Posterior cingulate gyrus (tissue), 11 donors: ENCODE measurements at regions of chr15 and their contacts with region 1.

Region 1: GRCh38 chr15:72231066-72231846 is at the start of gene PKM:
- DNase-seq: peak; percentile 73 to 99 (median 90)

Region 2: GRCh38 chr15:72117486-72118399 is 113.5 kb before region 1 on chr15 and contains the start of gene MYO9A:
- intact Hi-C with region 1: loop called (anchors 2 kb)
- DNase-seq: peak; percentile 93 to 99 (median 96)

Region 3: DNA sequence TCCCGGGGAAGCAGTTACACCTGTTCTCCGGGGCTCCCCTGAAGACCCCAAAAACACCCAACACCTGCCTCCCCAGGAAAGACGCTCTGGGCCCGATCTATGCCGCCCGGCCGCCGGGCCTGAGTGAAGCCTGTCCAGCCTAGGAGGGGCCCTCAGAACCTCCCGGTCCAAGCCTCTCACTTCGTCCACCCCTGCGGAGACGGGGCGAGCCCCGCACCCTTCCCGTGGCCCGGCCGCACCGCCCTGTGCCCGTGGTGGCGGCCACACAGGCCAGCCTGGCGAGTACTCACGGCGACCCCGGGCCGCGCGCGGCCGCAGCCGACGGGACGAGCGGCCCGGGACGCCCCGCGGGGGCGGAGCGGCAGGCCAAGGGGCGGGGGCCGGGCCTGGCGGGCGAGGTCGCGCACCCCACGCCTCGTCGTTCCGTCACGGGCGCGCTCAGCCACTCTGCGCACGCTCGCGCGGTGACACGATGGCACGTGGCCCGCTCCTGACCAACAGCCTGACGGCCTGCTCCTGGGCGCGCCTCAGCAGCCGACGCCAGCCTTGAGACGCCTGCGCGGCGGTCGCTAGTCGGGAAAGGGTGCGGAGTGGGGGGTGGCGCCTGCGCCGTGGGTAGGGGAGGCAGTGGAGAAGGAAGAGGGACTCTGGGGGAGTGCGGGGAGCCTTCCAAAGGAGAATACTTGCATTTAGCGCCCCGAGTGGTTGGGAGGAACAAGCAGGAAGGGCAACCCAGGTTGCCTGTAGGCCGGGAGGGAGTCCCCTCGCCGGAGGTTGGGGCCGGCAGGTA is 41.2 kb after region 1 on chr15 and contains the start of gene PARP6:
- intact Hi-C with region 1: loop called (anchors 1 kb)
- DNase-seq: peak; percentile 96 to 100 (median 98)

Region 4: DNA sequence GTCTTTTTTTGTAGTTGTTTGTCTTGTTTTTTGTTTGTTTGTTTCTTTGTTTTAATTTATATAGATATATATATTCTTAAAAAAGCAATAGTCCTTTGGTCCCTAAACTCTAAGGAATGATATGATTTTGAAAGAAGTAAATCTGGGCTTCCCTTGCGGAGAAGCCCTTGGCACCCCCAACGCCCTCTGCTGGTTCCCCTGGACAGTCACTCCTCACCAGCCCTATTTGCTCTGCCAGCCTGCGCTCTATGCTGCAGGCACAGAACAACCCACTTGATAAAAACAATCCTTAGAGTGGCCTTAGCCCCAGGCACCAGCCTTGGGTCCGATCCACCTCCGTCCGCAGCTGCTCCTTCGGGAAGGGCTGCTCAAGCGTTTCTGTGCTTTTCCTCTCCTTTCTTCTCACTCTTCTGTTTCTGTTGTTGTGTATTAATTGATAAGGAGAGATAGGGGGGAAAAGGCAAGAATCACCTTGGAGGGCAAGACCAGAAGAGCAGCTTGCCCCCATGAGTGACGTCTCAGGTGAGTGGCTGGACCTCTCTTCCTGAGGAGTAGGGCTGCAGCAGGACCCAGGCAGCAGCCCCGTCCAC is 54.8 kb after region 1 on chr15:
- intact Hi-C with region 1: no loop called
- DNase-seq: peak in 1 of 10 donors; percentile 60

Region 5: GRCh38 chr15:72358650-72359288 is 127.5 kb after region 1 on chr15:
- intact Hi-C with region 1: no loop called
- DNase-seq: peak in 8 of 10 donors; percentile 53 to 93 (median 72)

Region 6: GRCh38 chr15:72375847-72376581 is 144.8 kb after region 1 on chr15 and contains the start of gene HEXA:
- intact Hi-C with region 1: loop called (anchors 10 kb)
- DNase-seq: peak; percentile 90 to 100 (median 96)

Region 7: DNA sequence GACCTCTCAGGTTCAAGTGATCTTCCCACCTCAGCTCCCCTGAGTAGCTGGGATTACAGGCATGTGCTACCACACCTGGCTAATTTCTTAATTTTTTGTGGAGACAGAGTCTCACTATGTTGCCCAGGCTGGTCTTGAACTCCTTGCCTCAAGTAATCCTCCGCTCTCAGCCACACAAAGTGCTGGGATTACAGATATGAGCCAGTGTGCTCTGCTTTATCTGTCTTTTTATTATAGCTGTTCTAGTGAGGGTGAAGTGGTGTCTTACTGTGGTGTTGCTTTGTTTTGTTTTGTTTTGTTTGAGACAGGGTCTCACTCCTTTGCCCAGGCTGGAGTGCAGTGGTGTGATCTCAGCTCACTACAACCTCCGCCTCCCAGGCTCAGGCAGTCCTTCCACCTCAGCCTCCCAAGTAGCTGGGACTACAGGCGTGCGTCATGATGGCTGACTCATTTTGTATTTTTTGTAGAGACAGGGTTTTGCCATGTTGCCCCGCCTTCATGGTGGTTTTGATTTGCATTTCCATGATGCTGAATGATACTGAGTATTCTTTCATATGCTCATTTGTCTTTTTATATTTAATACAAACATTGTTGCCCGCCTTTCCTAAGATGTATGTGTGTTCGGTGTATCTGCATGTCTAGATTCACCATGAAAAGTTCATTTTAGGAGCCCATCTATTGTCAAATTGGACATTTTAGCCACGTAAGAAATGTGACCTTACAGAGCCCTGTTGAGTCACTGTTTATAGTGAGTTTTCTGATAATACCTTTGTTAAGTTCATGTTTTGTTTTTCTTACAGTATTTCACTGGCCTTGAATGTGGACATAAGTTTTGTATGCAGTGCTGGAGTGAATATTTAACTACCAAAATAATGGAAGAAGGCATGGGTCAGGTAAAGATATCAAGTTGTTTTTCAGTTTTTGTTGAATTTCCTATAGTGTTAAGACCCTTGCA is 323.5 kb after region 1 on chr15:
- intact Hi-C with region 1: no loop called
- DNase-seq: no peak